Naive thymus-derived CD8-positive, alpha-beta T cell (primary cell): ENCODE measurements at regions of chr11 and their contacts with region 1.

Region 1: GRCh38 chr11:95089620-95090542 is at the start of gene ENDOD1:
- DNase-seq: peak; percentile 78 to 89 (median 86)
- ATAC-seq: peak; percentile 91 to 94
- H3K4me3 Mint-ChIP-seq: peak within 1 kb of the TSS; percentile 87 to 97 (median 91)
- H3K27ac Mint-ChIP-seq: peak within 1 kb of the TSS; percentile 95 to 99 (median 98)
- H3K4me1 Mint-ChIP-seq: peaks cover 28 to 57% (median 46%) of the 10 kb centered on the region in 4 donors
- H3K27me3 Mint-ChIP-seq: no peaks in the 10 kb centered on the region
- polyA plus RNA-seq, gene ENDOD1: 3.9 to 10.1 (median 6.9) TPM

Region 2: GRCh38 chr11:95035316-95035715 is 54.6 kb before region 1 on chr11:
- POLR2A ChIA-PET with region 1: interaction called, 11 read pairs
- DNase-seq: no peak
- ATAC-seq: no peak
- H3K4me3 Mint-ChIP-seq: no peak overlapping the region
- H3K27ac Mint-ChIP-seq: no peak overlapping the region
- H3K4me1 Mint-ChIP-seq: peaks cover 0 to 5% (median 0%) of the 10 kb centered on the region in 4 donors
- H3K27me3 Mint-ChIP-seq: peaks cover 9 to 33% (median 25%) of the 10 kb centered on the region in 5 donors

Region 3: DNA sequence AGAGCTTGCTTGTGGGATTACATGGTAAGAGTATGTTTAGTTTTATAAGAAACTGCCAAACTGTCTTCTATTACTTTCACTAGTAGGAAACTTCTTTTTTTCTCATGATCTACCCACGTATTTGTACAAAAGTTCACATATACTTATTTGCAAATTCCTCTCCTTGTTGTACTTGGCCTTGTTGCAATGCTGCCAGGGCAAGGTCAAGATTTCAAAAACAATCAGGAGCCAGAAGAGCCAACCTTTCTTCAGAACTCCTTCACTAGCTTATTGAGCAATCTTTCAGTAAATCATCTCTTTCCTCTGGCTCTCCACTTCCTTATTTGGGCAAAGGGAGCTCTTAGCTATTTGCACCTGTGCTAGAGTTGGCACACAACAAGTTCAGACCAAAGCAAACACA is 13.5 kb before region 1 on chr11:
- POLR2A ChIA-PET with region 1: interaction called, 18 read pairs
- DNase-seq: no peak
- ATAC-seq: no peak
- H3K4me3 Mint-ChIP-seq: no peak overlapping the region
- H3K27ac Mint-ChIP-seq: no peak overlapping the region
- H3K4me1 Mint-ChIP-seq: peaks cover 8 to 14% (median 14%) of the 10 kb centered on the region in 4 donors
- H3K27me3 Mint-ChIP-seq: peaks cover 0 to 2% (median 0%) of the 10 kb centered on the region in 5 donors

Region 4: DNA sequence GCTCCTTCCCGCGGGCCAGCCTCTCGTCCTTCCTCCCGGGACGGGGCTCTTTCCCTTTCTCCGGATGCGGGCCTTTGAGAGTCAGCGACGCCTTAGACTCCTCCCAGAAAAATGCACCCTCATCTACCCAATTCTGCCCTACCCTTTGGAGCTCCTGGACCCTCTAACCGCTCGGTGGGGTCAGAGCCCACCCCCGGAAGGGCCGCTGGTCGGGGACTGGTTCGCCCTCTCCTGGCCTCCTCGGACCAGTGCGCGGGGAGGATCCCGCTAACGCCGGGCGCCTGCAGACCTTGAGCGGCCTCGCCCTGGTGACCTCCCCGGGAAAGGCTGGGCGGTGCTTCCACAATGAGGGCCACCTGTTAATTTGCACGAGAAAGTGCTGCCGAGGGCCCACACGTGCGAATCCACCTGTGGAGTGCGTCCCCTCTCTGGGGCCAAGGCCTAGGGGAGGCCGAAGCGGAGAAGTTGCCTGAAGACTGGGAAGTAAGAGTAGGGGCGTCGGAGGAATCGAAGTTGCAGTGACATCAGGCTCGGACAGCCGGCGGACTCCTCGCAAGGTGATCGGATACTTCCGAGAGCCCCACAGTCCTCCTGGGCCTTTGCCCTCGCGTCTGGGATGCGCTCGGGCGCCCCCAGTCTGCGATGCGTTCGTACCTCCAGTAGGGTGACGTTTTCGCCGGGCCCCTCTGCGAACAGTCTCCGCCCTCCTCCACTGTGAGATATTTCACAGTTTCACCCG is 61.2 kb after region 1 on chr11:
- POLR2A ChIA-PET with region 1: interaction called, 48 read pairs
- DNase-seq: peak; percentile 81 to 95 (median 90)
- ATAC-seq: peak; percentile 91 to 96
- H3K4me3 Mint-ChIP-seq: peak overlapping the region; percentile 83 to 99 (median 90)
- H3K27ac Mint-ChIP-seq: peak overlapping the region; percentile 85 to 100 (median 96)
- H3K4me1 Mint-ChIP-seq: peaks cover 22 to 45% (median 32%) of the 10 kb centered on the region in 4 donors
- H3K27me3 Mint-ChIP-seq: peaks cover 3 to 11% (median 7%) of the 10 kb centered on the region in 5 donors